Activated CD8-positive, alpha-beta T cell treated with anti-CD3 and anti-CD28 coated beads for 36 hours (primary cell): ENCODE measurements at regions of chr3 and their contacts with region 1.

Region 1: GRCh38 chr3:178385280-178385952 is 150.8 kb upstream of the KCNMB2 start:
- DNase-seq: peak; percentile 11
- ATAC-seq: peak; percentile 55
- H3K4me3 Mint-ChIP-seq: no peak overlapping the region
- H3K27ac Mint-ChIP-seq: no peak overlapping the region
- H3K4me1 Mint-ChIP-seq: no peaks in the 10 kb centered on the region
- H3K27me3 Mint-ChIP-seq: peaks cover 6% of the 10 kb centered on the region
- CTCF ChIP-seq: peak; percentile 70

Region 2: GRCh38 chr3:176872771-176873209 is 1512.6 kb before region 1 on chr3:
- CTCF ChIA-PET with region 1: interaction called, 10 read pairs
- POLR2A ChIA-PET with region 1: no interaction called
- intact Hi-C with region 1: no loop called
- DNase-seq: peak; percentile 75
- ATAC-seq: peak; percentile 98
- H3K4me3 Mint-ChIP-seq: no peak overlapping the region
- H3K27ac Mint-ChIP-seq: peak overlapping the region; percentile 85
- H3K4me1 Mint-ChIP-seq: peaks cover 4% of the 10 kb centered on the region
- H3K27me3 Mint-ChIP-seq: no peaks in the 10 kb centered on the region
- CTCF ChIP-seq: peak; percentile 58